Esophagus muscularis mucosa (tissue), 4 donors: ENCODE measurements at regions of chr19 and their contacts with region 1.

Region 1: GRCh38 chr19:35643255-35644205 is 2.0 kb downstream of the ETV2 start:
- DNase-seq: peak; percentile 95
- H3K4me3 ChIP-seq: peak overlapping the region; percentile 59 to 80 (median 62)
- H3K27ac ChIP-seq: peak overlapping the region; percentile 83 to 95 (median 88)
- H3K4me1 ChIP-seq: peaks cover 15 to 47% (median 45%) of the 10 kb centered on the region in 4 donors
- H3K27me3 ChIP-seq: no peaks in the 10 kb centered on the region
- CTCF ChIP-seq: peak in 1 of 3 experiments; percentile 5
- EP300 ChIP-seq: no peak
- POLR2A ChIP-seq: no peak

Region 2: DNA sequence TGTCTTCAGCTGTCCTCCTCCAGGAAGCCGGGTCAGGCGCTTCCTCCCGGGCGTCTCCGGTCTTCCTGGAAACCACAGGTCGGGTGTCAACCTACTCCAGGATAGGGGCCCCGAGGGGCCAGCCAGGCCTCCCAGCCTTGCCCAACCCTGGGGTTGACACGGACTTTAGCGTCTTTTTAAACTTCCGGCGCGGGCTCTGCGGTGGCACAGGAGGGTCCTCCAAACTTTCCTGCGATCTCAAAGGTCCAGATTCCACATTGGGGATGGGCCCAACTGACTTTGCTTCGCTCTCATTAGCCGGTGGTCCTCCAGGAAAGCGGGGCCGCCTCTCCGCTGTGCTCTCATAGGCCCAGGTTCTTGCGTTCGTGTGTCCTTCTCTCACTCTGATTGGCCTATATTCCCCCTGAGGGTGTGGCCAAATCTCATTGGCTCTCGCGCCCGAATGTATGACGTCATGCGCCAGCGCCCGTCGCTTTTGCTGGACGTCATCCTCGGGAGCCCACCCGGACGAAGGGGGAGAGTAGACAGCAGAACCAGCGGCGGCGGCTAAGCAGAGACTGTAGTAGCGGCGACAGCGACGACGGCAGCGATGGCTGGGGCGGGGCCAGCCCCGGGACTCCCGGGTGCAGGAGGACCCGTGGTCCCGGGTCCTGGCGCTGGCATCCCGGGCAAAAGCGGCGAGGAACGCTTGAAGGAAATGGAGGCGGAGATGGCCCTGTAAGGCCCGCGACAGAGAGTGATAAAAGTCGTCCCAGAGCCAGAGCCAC is 14.8 kb before region 1 on chr19 and contains the start of gene RBM42:
- intact Hi-C with region 1: loop called (anchors 2 kb)
- DNase-seq: peak; percentile 100
- H3K4me3 ChIP-seq: peak within 1 kb of the TSS; percentile 88 to 99 (median 94)
- H3K27ac ChIP-seq: peak within 1 kb of the TSS; percentile 86 to 96 (median 92)
- H3K4me1 ChIP-seq: peaks cover 19 to 32% (median 28%) of the 10 kb centered on the region in 4 donors
- H3K27me3 ChIP-seq: no peaks in the 10 kb centered on the region
- CTCF ChIP-seq: peak in 1 of 3 experiments; percentile 41
- EP300 ChIP-seq: no peak
- POLR2A ChIP-seq: peak; percentile 49
- total RNA-seq, gene RBM42: 63.1 to 112 (median 95.2) TPM